ENCODE measurements at regions of chr1 and their contacts with region 1.

Region 1: GRCh38 chr1:121458291-121459048 is 273.7 kb downstream of the SRGAP2C start:
- DNase-seq: peak; percentile 94
- H3K4me3 ChIP-seq: peak overlapping the region; percentile 58
- H3K27ac ChIP-seq: peak overlapping the region; percentile 96
- H3K4me1 ChIP-seq: peaks cover 42% of the 10 kb centered on the region
- CTCF ChIP-seq: no peak

Region 2: DNA sequence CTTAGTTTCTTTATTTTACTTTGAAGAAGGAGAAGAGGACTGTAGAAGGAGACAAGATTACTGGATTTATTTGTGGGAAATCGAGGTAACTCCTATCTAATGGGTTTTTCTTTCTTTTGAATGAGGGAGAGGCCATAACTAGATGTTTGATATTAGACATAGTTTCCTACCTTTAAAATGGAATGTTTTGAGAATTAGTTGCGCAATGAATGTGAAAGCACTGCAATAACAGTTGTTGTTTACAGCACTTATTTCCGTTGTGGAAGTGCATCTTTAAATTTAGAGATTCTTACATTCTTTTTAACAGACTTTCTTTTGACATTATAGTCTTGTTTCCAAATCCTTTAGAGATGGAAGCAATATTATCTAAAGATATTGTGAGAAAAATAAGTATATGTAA is 44.7 kb before region 1 on chr1:
- CTCF ChIA-PET with region 1: no interaction called
- POLR2A ChIA-PET with region 1: no interaction called
- intact Hi-C with region 1: loop called (anchors 5 kb)
- DNase-seq: no peak
- H3K4me3 ChIP-seq: no peak overlapping the region
- H3K27ac ChIP-seq: no peak overlapping the region
- H3K4me1 ChIP-seq: peaks cover 2% of the 10 kb centered on the region
- CTCF ChIP-seq: no peak

Region 3: GRCh38 chr1:121519042-121519755 is 60.7 kb after region 1 on chr1:
- CTCF ChIA-PET with region 1: no interaction called
- POLR2A ChIA-PET with region 1: interaction called, 18 read pairs
- intact Hi-C with region 1: loop called (anchors 5 kb)
- DNase-seq: peak; percentile 94
- H3K4me3 ChIP-seq: peak overlapping the region; percentile 71
- H3K27ac ChIP-seq: peak overlapping the region; percentile 87
- H3K4me1 ChIP-seq: peaks cover 35% of the 10 kb centered on the region
- CTCF ChIP-seq: peak; percentile 35; the same call in 1 of the 2 replicates

Region 4: DNA sequence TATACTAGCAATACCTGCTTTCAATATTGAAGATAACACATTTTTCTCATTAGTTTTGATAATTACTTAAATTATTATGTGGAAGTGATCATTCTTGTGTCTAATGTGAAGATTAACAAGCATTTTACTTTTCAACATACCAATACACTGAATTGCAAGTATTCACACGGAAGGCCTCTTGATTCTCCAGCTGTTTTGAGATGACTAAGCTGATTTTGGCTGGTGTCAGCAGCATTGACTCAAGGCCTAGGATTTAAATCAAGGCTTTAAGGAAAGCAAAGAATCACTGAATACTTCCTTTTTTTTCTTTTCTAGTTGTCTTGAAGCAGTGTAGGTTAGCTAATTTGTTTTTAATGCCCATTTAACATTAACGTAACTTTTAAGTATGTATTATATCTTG is 100.0 kb after region 1 on chr1:
- CTCF ChIA-PET with region 1: no interaction called
- POLR2A ChIA-PET with region 1: no interaction called
- intact Hi-C with region 1: loop called (anchors 5 kb)
- DNase-seq: no peak
- H3K4me3 ChIP-seq: no peak overlapping the region
- H3K27ac ChIP-seq: no peak overlapping the region
- H3K4me1 ChIP-seq: peaks cover 2% of the 10 kb centered on the region
- CTCF ChIP-seq: no peak

Measured in OCI-LY7 (cell line).